Activated B cell treated with CpG ODN at 0.5 μM for 24 hours (primary cell): ENCODE measurements at regions of chr13 and their contacts with region 1.

Region 1: GRCh38 chr13:30739761-30740642 is 4.7 kb downstream of the ALOX5AP start:
- DNase-seq: no peak
- ATAC-seq: peak; percentile 26
- H3K4me3 Mint-ChIP-seq: peak overlapping the region; percentile 74
- H3K27ac Mint-ChIP-seq: peak overlapping the region; percentile 72
- H3K4me1 Mint-ChIP-seq: peaks cover 91% of the 10 kb centered on the region
- H3K27me3 Mint-ChIP-seq: no peaks in the 10 kb centered on the region
- CTCF ChIP-seq: no peak

Region 2: DNA sequence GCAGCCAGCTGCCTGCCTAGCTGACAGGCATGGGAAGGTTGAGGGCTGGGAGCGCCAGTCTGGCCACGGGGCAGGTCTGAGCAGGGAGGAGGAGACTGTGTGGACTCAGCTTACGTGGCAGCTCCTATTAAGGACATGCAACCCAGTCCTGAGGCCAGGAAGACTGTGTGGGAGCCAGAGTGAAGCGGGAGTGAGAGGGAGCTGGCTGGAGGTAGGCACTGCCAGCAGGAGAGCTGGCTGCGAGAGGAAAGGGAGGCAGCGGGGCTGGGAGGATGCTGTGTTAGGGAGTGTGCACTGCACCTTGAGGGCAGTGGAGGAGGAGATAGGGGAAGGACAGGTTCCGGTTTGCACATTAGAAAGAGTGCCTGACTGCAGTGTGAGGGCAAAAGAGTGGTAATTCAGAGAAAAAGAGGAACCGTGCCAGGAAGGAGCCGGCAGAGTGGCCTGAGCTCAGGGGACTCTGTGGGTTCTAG is 1243.7 kb before region 1 on chr13:
- CTCF ChIA-PET with region 1: no interaction called
- POLR2A ChIA-PET with region 1: interaction called, 10 read pairs
- intact Hi-C with region 1: no loop called
- DNase-seq: peak; percentile 38
- ATAC-seq: peak; percentile 70
- H3K4me3 Mint-ChIP-seq: peak overlapping the region; percentile 71
- H3K27ac Mint-ChIP-seq: peak overlapping the region; percentile 68
- H3K4me1 Mint-ChIP-seq: peaks cover 36% of the 10 kb centered on the region
- H3K27me3 Mint-ChIP-seq: no peaks in the 10 kb centered on the region
- CTCF ChIP-seq: no peak

Region 3: DNA sequence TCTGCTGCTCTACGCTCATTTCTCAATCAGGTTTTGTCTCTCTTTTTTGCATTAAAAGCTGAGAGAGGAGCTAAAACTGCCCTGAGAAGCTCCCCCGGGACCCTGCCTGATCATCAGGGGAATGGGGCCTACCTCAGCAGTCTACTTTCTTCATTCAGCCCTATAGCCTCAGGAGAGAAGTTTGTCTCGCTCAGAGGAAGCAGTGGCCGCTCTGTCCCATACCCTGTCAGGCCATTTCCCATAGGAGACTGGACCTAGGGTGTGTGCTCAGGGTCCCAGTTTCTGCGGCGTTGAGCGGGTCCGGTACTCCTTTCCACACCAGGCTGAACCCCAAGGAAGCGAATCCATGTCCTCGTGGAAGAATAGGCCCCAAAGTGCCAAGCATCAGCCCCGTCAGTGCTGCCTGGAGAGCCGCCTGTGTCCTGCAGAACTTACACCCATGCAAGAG is 296.0 kb before region 1 on chr13:
- CTCF ChIA-PET with region 1: no interaction called
- POLR2A ChIA-PET with region 1: no interaction called
- intact Hi-C with region 1: no loop called
- DNase-seq: peak; percentile 76
- ATAC-seq: peak; percentile 88
- H3K4me3 Mint-ChIP-seq: peak overlapping the region; percentile 79
- H3K27ac Mint-ChIP-seq: peak overlapping the region; percentile 97
- H3K4me1 Mint-ChIP-seq: peaks cover 72% of the 10 kb centered on the region
- H3K27me3 Mint-ChIP-seq: no peaks in the 10 kb centered on the region
- CTCF ChIP-seq: no peak

Region 4: GRCh38 chr13:30659980-30660379 is 80.0 kb before region 1 on chr13:
- CTCF ChIA-PET with region 1: interaction called, 3 read pairs
- POLR2A ChIA-PET with region 1: interaction called, 5 read pairs
- intact Hi-C with region 1: loop called (anchors 1 kb)
- DNase-seq: no peak
- ATAC-seq: no peak
- H3K4me3 Mint-ChIP-seq: peak overlapping the region; percentile 53
- H3K27ac Mint-ChIP-seq: peak overlapping the region; percentile 84
- H3K4me1 Mint-ChIP-seq: peaks cover 5% of the 10 kb centered on the region
- H3K27me3 Mint-ChIP-seq: no peaks in the 10 kb centered on the region
- CTCF ChIP-seq: no peak

Region 5: GRCh38 chr13:30679483-30680330 is 60.3 kb before region 1 on chr13:
- CTCF ChIA-PET with region 1: interaction called, 3 read pairs
- POLR2A ChIA-PET with region 1: interaction called, 3 read pairs
- intact Hi-C with region 1: loop called (anchors 1 kb)
- DNase-seq: no peak
- ATAC-seq: peak; percentile 96
- H3K4me3 Mint-ChIP-seq: no peak overlapping the region
- H3K27ac Mint-ChIP-seq: peak overlapping the region; percentile 20
- H3K4me1 Mint-ChIP-seq: peaks cover 15% of the 10 kb centered on the region
- H3K27me3 Mint-ChIP-seq: no peaks in the 10 kb centered on the region
- CTCF ChIP-seq: no peak

Region 6: GRCh38 chr13:30720172-30720869 is 19.7 kb before region 1 on chr13:
- CTCF ChIA-PET with region 1: interaction called, 3 read pairs
- POLR2A ChIA-PET with region 1: interaction called, 25 read pairs
- intact Hi-C with region 1: loop called (anchors 1 kb)
- DNase-seq: no peak
- ATAC-seq: peak; percentile 71
- H3K4me3 Mint-ChIP-seq: peak overlapping the region; percentile 64
- H3K27ac Mint-ChIP-seq: peak overlapping the region; percentile 19
- H3K4me1 Mint-ChIP-seq: peaks cover 49% of the 10 kb centered on the region
- H3K27me3 Mint-ChIP-seq: no peaks in the 10 kb centered on the region
- CTCF ChIP-seq: no peak

Region 7: GRCh38 chr13:30776661-30777060 is 36.7 kb after region 1 on chr13:
- CTCF ChIA-PET with region 1: no interaction called
- POLR2A ChIA-PET with region 1: no interaction called
- intact Hi-C with region 1: loop called (anchors 5 kb)
- DNase-seq: no peak
- ATAC-seq: peak; percentile 67
- H3K4me3 Mint-ChIP-seq: no peak overlapping the region
- H3K27ac Mint-ChIP-seq: no peak overlapping the region
- H3K4me1 Mint-ChIP-seq: peaks cover 9% of the 10 kb centered on the region
- H3K27me3 Mint-ChIP-seq: no peaks in the 10 kb centered on the region
- CTCF ChIP-seq: no peak

Region 8: GRCh38 chr13:31161828-31162590 is 422.0 kb after region 1 on chr13 and contains the start of gene HSPH1:
- CTCF ChIA-PET with region 1: no interaction called
- POLR2A ChIA-PET with region 1: no interaction called
- intact Hi-C with region 1: loop called (anchors 5 kb)
- DNase-seq: peak; percentile 99
- ATAC-seq: peak; percentile 85
- H3K4me3 Mint-ChIP-seq: peak within 1 kb of the TSS; percentile 97
- H3K27ac Mint-ChIP-seq: peak within 1 kb of the TSS; percentile 95
- H3K4me1 Mint-ChIP-seq: peaks cover 36% of the 10 kb centered on the region
- H3K27me3 Mint-ChIP-seq: no peaks in the 10 kb centered on the region
- CTCF ChIP-seq: no peak
- total RNA-seq, gene HSPH1: 107 and 112 TPM in 2 replicates